ENCODE measurements at regions of chr16 and their contacts with region 1.

Region 1: GRCh38 chr16:71311553-71312158 is 22.5 kb upstream of the CMTR2 start:
- DNase-seq: no peak
- H3K4me3 ChIP-seq: no peak overlapping the region
- H3K27ac ChIP-seq: no peak overlapping the region
- H3K4me1 ChIP-seq: no peaks in the 10 kb centered on the region
- H3K27me3 ChIP-seq: no peaks in the 10 kb centered on the region
- CTCF ChIP-seq: peak; percentile 85

Region 2: GRCh38 chr16:71255721-71256120 is 55.9 kb before region 1 on chr16:
- intact Hi-C with region 1: loop called (anchors 10 kb)
- DNase-seq: no peak
- H3K4me3 ChIP-seq: no peak overlapping the region
- H3K27ac ChIP-seq: no peak overlapping the region
- H3K4me1 ChIP-seq: no peaks in the 10 kb centered on the region
- H3K27me3 ChIP-seq: no peaks in the 10 kb centered on the region
- CTCF ChIP-seq: no peak

Measured in colonic mucosa (tissue), 4 donors.